GM12878 (cell line): ENCODE measurements at regions of chr3 and their contacts with region 1.

Region 1: GRCh38 chr3:111882799-111883198 is 23.7 kb downstream of the PHLDB2 start:
- DNase-seq: no peak
- ATAC-seq: peak; percentile 96
- H3K4me3 ChIP-seq: no peak overlapping the region
- H3K27ac ChIP-seq: no peak overlapping the region
- H3K4me1 ChIP-seq: peaks cover 4% of the 10 kb centered on the region; the same call in 1 of the 2 replicates
- H3K27me3 ChIP-seq: peaks cover 0 to 3% of the 10 kb centered on the region in 2 experiments; a peak in 1 of 4 replicates
- CTCF ChIP-seq: no peak
- EP300 ChIP-seq: no peak
- POLR2A ChIP-seq: no peak
- RAD21 ChIP-seq: no peak

Region 2: DNA sequence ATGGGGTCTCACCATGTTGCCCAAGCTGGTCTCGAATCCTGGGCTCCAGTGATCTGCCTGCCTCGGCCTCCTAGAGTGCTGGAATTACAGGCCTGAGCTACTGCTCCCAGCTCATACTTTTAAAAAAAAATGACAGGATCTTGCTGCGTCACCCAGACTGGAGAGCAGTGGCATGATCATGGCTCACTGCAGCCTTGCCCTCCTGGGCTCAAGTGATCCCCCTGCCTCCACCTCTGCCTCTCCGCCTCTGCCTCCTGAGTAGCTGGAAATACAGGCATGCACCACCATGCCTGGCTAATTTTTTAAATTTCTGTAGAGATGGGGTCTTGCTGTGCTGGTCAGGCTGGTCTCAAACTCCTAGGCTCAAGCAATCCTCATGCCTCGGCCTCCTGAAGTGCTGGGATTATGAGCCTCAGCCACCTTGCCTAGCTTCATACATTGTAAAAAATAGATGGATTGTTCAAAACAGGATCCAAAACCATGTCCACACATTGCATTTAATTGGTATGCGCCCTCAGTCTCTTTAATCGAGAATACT is 14.8 kb before region 1 on chr3:
- CTCF ChIA-PET with region 1: interaction called, 7 read pairs
- POLR2A ChIA-PET with region 1: interaction called, 5 read pairs
- RAD21 ChIA-PET with region 1: interaction called, 4 read pairs
- SMC1A ChIA-PET with region 1: interaction called, 19 read pairs
- in situ Hi-C with region 1: no loop called
- intact Hi-C with region 1: no loop called
- DNase-seq: no peak
- ATAC-seq: no peak
- H3K4me3 ChIP-seq: no peak overlapping the region
- H3K27ac ChIP-seq: no peak overlapping the region
- H3K4me1 ChIP-seq: no peaks in the 10 kb centered on the region
- H3K27me3 ChIP-seq: peaks cover 0 to 5% of the 10 kb centered on the region in 2 experiments; a peak in 2 of 4 replicates
- CTCF ChIP-seq: no peak
- EP300 ChIP-seq: no peak
- POLR2A ChIP-seq: no peak
- RAD21 ChIP-seq: no peak

Region 3: DNA sequence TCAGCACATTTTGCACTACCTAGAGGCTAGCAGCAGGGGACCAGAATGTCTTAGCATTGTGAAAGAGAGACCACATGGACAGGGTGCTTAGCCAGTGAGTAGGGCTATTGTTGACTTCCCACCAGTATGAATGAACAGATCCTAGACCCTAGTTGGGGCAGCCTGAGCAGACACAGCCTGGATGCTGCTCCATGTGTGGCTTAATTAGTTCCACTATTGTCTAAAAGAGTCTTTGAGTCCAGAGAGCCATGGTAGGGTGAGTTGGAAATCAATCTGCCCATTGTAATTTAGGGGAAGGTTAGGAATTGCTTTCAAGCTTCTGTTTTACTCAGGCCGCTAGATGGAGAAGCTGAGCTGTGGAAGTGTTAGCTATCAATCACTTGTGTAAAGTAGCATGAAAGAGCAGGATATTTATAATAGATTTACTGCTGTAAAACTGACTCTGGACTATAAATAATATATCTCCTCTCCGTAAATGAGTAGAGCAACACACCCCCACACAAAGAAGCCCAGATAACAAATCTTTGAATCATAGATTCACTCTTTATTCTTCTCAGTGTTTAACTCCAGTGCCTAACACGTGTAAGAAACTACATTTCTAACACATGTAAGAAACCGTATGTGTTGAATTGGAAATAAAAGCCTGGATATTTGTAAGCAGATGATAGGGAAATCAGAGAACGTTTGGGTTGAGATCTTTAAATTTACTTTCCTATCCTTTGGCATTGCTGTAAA is 254.3 kb after region 1 on chr3:
- CTCF ChIA-PET with region 1: no interaction called
- POLR2A ChIA-PET with region 1: no interaction called
- RAD21 ChIA-PET with region 1: no interaction called
- SMC1A ChIA-PET with region 1: no interaction called
- in situ Hi-C with region 1: no loop called
- intact Hi-C with region 1: no loop called
- DNase-seq: no peak
- ATAC-seq: peak; percentile 42
- H3K4me3 ChIP-seq: no peak overlapping the region
- H3K27ac ChIP-seq: peak overlapping the region; percentile 99
- H3K4me1 ChIP-seq: peaks cover 47% of the 10 kb centered on the region
- H3K27me3 ChIP-seq: no peaks in the 10 kb centered on the region
- CTCF ChIP-seq: peak; percentile 67 to 88 (median 81); a peak in 5 of 6 replicates
- EP300 ChIP-seq: 0 out of 4 replicates have a peak, but pooled peaks of 1 of the 2 experiments have one; percentile 32
- POLR2A ChIP-seq: peak; percentile 67
- RAD21 ChIP-seq: peak; percentile 94

Region 4: DNA sequence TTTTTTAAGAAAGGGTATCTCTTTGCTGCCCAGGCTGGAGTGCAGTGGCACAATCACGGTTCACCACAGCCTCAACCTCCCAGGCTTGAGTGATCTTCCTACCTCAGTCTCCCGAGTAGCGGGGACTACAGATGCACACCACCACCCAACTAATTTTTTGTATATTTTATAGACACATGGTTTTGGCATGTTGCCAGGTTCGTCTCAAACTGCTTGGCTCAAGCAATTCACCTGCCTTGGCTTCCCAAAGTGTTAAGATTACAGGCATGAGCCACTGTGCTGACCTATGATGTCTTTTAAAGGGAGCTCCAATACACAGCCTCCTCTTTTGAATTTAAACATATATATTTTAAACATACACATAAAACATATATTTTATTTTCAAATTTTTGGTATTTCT is 350.3 kb after region 1 on chr3:
- CTCF ChIA-PET with region 1: no interaction called
- POLR2A ChIA-PET with region 1: no interaction called
- RAD21 ChIA-PET with region 1: no interaction called
- SMC1A ChIA-PET with region 1: no interaction called
- in situ Hi-C with region 1: no loop called
- intact Hi-C with region 1: loop called (anchors 5 kb)
- DNase-seq: no peak
- ATAC-seq: no peak
- H3K4me3 ChIP-seq: no peak overlapping the region
- H3K27ac ChIP-seq: no peak overlapping the region
- H3K4me1 ChIP-seq: no peaks in the 10 kb centered on the region
- H3K27me3 ChIP-seq: no peaks in the 10 kb centered on the region
- CTCF ChIP-seq: no peak
- EP300 ChIP-seq: no peak
- POLR2A ChIP-seq: no peak
- RAD21 ChIP-seq: no peak